PC-3 (cell line): ENCODE measurements at regions of chr3 and their contacts with region 1.

Region 1: GRCh38 chr3:132641837-132642538 is 17.6 kb downstream of the ACAD11 start:
- DNase-seq: peak; percentile 66
- ATAC-seq: peak; percentile 68
- H3K4me3 ChIP-seq: no peak overlapping the region
- H3K27ac ChIP-seq: no peak overlapping the region
- H3K4me1 ChIP-seq: peaks cover 21% of the 10 kb centered on the region
- H3K27me3 ChIP-seq: no peaks in the 10 kb centered on the region
- CTCF ChIP-seq: peak; percentile 66

Region 2: DNA sequence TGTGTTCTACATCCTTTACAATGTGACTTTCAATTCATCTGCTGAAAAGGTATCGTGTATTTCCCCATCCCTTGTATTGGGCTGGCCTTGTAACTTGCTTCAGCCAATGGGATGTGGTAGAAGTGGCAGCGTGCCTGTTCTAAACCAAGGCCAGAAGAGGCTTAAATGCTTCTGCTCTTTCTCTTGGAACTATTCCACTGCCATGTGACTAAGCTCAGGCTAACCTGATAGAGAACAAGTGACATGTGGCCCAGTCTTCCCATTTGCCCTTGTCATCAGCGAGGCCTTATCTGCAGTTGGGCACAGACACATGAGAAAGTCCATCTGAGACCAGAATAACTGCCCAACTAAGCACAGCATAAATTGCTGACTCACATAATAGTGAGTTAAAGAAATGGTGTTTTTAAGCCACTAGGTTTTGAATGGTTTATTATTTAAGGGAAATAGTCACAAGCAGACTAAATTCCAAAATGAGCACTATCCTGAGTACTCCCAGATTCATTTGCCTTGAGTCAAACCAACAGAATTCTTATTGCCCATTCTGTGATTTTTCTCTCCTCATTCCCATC is 837.3 kb before region 1 on chr3:
- CTCF ChIA-PET with region 1: no interaction called
- POLR2A ChIA-PET with region 1: no interaction called
- intact Hi-C with region 1: no loop called
- DNase-seq: no peak
- ATAC-seq: no peak
- H3K4me3 ChIP-seq: no peak overlapping the region
- H3K27ac ChIP-seq: no peak overlapping the region
- H3K4me1 ChIP-seq: no peaks in the 10 kb centered on the region
- H3K27me3 ChIP-seq: no peaks in the 10 kb centered on the region
- CTCF ChIP-seq: no peak

Region 3: GRCh38 chr3:132352541-132353143 is 289.3 kb before region 1 on chr3:
- CTCF ChIA-PET with region 1: no interaction called
- POLR2A ChIA-PET with region 1: no interaction called
- intact Hi-C with region 1: loop called (anchors 5 kb)
- DNase-seq: peak; percentile 79
- ATAC-seq: peak; percentile 69
- H3K4me3 ChIP-seq: no peak overlapping the region
- H3K27ac ChIP-seq: no peak overlapping the region
- H3K4me1 ChIP-seq: no peaks in the 10 kb centered on the region
- H3K27me3 ChIP-seq: no peaks in the 10 kb centered on the region
- CTCF ChIP-seq: peak; percentile 86

Region 4: DNA sequence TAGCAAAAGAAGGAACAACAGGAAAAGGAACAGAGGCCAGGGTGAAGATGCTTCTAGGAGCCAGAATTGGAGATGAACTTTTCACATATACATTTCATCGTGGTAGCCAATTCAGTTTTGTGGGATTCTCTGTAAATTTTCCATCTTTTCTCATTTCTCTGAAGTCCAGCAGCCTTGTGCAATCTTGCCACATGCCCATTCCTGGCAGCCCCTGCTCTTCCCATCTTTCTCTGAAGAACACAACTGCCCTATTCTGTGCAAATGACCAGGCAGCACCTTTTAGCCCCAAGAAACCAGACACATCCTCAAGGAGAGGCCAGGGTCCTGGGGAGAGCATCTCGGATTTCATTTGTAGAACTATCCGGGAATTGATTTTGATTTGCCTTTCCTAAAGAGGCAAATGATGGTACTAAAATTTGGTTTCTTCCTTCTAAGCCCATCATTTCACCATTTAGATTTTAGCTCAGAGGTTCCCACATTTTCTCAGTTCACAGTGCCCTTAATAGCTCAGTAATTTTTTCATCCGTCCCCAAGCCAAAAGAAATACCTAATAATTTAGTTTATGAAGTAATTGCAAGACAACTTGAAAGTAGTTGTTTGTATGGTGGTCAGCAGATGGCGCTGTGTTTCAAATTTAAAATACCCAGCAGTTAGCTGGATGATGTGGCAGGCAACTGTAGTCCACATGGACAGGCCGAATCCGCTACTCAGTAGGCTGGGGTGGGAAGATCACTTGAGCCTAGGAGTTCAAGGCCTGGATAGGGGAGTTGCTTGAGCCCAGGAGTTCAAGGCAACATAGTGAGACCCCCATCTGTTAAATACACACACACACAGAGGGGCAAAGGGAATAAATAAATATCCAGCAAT is 106.2 kb before region 1 on chr3:
- CTCF ChIA-PET with region 1: interaction called, 10 read pairs
- POLR2A ChIA-PET with region 1: no interaction called
- intact Hi-C with region 1: loop called (anchors 1 kb)
- DNase-seq: peak; percentile 71
- ATAC-seq: peak; percentile 83
- H3K4me3 ChIP-seq: no peak overlapping the region
- H3K27ac ChIP-seq: no peak overlapping the region
- H3K4me1 ChIP-seq: no peaks in the 10 kb centered on the region
- H3K27me3 ChIP-seq: no peaks in the 10 kb centered on the region
- CTCF ChIP-seq: peak; percentile 65

Region 5: GRCh38 chr3:132543036-132543739 is 98.8 kb before region 1 on chr3:
- CTCF ChIA-PET with region 1: no interaction called
- POLR2A ChIA-PET with region 1: no interaction called
- intact Hi-C with region 1: loop called (anchors 2 kb)
- DNase-seq: peak; percentile 77
- ATAC-seq: peak; percentile 93
- H3K4me3 ChIP-seq: no peak overlapping the region
- H3K27ac ChIP-seq: peak overlapping the region; percentile 87
- H3K4me1 ChIP-seq: peaks cover 21% of the 10 kb centered on the region
- H3K27me3 ChIP-seq: no peaks in the 10 kb centered on the region
- CTCF ChIP-seq: no peak

Region 6: DNA sequence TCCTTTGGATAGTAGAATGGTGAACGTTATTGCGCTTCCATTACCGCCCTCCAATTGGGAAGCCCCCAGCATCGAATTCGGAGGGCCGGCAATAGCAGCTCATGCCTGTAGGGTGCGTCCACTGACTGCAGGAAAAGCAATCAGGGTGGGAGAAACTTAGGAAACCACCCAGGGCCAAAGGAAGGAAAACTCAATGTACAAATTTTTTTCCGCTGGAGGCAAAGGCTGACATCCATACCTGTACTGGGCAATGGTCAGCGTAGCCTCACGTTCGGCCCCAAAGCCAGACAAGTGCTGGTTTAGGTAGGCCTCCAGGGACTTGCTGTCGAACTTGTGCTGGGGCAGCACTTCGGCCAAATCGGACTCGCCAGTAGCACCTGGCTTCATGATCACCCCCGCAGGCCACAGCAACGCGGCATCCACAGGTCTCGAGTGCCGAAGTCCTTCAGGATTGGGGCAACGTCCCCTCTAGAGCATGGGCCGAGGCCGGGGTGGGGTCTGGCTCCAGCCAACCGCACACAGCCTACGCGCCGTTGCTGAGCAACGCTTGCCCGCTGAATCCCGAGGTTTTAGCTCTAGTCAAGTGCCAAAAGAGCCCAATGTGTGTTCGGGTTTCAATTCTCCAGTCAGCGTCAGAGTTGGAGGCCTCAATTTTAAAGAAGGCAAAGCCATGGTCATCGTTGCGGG is 17.5 kb after region 1 on chr3 and contains the start of gene ACAD11:
- CTCF ChIA-PET with region 1: no interaction called
- POLR2A ChIA-PET with region 1: no interaction called
- intact Hi-C with region 1: no loop called
- DNase-seq: peak; percentile 52
- ATAC-seq: peak; percentile 71
- H3K4me3 ChIP-seq: peak within 1 kb of the TSS; percentile 93
- H3K27ac ChIP-seq: peak within 1 kb of the TSS; percentile 35
- H3K4me1 ChIP-seq: peaks cover 27% of the 10 kb centered on the region
- H3K27me3 ChIP-seq: no peaks in the 10 kb centered on the region
- CTCF ChIP-seq: peak; percentile 61
- total RNA-seq, gene ACAD11: 4.7 and 5.8 TPM in 2 replicates